Activated CD8-positive, alpha-beta T cell treated with anti-CD3 and anti-CD28 coated beads for 36 hours (primary cell): ENCODE measurements at regions of chr17 and their contacts with region 1.

Region 1: DNA sequence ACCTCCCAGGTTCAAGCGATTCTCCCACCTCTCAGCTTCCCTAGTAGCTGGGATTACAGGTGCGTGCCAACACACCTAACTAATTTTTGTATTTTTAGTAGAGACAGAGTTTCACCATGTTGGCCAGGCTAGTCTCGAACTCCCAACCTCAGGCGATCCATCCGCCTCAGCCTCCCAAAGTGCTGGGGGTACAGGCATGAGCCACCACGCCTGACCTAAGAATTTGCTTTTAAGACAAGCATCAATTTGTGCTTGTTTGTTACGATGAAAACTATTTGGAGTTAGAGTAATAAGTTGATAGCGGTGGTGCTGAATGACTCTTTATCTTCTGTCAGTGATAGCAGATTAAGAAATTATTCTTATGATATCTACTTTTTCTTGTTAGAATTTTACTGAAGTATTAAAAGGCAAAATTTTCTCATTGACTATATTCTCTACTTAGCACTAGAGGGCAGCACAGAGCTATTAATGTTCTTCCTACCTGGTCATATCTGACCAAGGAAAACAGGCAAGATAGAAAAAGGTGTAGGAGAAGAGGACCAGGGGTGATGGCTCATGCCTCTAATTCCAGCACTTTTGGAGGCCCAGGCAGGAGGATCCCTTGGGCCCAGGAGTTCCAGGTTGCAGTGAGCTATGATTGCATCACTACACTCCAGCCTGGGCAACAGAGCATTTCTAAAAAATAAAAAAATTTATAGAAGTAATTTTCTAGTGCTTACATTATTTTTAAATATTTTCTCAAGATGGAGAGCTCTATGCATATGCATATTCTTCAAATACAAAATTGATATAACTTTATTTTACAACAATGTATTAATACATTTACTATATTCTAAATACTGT is 24.5 kb downstream of the STXBP4 start:
- DNase-seq: no peak
- ATAC-seq: no peak
- H3K4me3 Mint-ChIP-seq: no peak overlapping the region
- H3K27ac Mint-ChIP-seq: no peak overlapping the region
- H3K4me1 Mint-ChIP-seq: no peaks in the 10 kb centered on the region
- H3K27me3 Mint-ChIP-seq: no peaks in the 10 kb centered on the region
- CTCF ChIP-seq: peak; percentile 70

Region 2: GRCh38 chr17:55005520-55005919 is 12.5 kb after region 1 on chr17:
- CTCF ChIA-PET with region 1: interaction called, 21 read pairs
- POLR2A ChIA-PET with region 1: no interaction called
- intact Hi-C with region 1: no loop called
- DNase-seq: peak; percentile 15
- ATAC-seq: peak; percentile 56
- H3K4me3 Mint-ChIP-seq: no peak overlapping the region
- H3K27ac Mint-ChIP-seq: no peak overlapping the region
- H3K4me1 Mint-ChIP-seq: no peaks in the 10 kb centered on the region
- H3K27me3 Mint-ChIP-seq: no peaks in the 10 kb centered on the region
- CTCF ChIP-seq: peak; percentile 62

Region 3: GRCh38 chr17:55040611-55041010 is 47.6 kb after region 1 on chr17:
- CTCF ChIA-PET with region 1: no interaction called
- POLR2A ChIA-PET with region 1: no interaction called
- intact Hi-C with region 1: no loop called
- DNase-seq: no peak
- ATAC-seq: no peak
- H3K4me3 Mint-ChIP-seq: no peak overlapping the region
- H3K27ac Mint-ChIP-seq: no peak overlapping the region
- H3K4me1 Mint-ChIP-seq: no peaks in the 10 kb centered on the region
- H3K27me3 Mint-ChIP-seq: no peaks in the 10 kb centered on the region
- CTCF ChIP-seq: no peak

Region 4: DNA sequence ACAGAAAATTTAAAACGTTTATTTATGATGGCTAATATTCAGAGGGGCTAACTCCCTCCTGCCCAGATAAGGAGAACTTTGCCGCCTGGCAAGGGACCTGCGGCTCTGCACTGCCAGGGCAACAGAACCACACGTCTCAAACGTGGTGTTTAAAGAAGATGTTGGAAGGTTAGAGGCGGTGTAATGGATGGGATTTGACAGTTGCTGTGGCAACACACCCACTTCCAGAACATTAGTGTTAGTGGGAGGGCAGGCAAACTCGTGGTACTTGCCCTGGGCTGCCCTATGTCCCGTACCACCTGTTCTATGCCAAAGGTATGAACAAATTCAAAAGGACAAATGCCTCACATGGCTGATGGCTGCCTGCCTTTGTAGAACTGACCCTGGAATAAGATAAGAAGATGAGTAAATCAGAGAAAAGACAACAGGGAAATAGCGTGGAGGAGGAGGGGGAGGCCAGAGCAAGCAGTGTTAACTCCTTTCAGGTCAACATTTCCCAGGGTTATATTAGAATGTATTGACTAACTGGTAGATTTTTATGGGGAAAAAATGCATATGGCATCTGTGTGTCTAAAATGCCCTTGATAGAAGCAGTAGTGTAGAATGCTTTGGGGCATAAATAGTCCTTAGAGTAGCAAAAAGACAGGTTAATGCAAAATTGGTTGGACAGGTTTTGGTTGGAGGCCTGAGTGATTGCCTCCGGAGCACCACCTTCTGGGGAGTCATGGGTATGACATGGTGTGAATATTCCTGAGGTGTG is 302.6 kb after region 1 on chr17:
- CTCF ChIA-PET with region 1: interaction called, 21 read pairs
- POLR2A ChIA-PET with region 1: no interaction called
- intact Hi-C with region 1: loop called (anchors 2 kb)
- DNase-seq: peak; percentile 62
- ATAC-seq: peak; percentile 88
- H3K4me3 Mint-ChIP-seq: no peak overlapping the region
- H3K27ac Mint-ChIP-seq: no peak overlapping the region
- H3K4me1 Mint-ChIP-seq: no peaks in the 10 kb centered on the region
- H3K27me3 Mint-ChIP-seq: no peaks in the 10 kb centered on the region
- CTCF ChIP-seq: peak; percentile 86

Region 5: DNA sequence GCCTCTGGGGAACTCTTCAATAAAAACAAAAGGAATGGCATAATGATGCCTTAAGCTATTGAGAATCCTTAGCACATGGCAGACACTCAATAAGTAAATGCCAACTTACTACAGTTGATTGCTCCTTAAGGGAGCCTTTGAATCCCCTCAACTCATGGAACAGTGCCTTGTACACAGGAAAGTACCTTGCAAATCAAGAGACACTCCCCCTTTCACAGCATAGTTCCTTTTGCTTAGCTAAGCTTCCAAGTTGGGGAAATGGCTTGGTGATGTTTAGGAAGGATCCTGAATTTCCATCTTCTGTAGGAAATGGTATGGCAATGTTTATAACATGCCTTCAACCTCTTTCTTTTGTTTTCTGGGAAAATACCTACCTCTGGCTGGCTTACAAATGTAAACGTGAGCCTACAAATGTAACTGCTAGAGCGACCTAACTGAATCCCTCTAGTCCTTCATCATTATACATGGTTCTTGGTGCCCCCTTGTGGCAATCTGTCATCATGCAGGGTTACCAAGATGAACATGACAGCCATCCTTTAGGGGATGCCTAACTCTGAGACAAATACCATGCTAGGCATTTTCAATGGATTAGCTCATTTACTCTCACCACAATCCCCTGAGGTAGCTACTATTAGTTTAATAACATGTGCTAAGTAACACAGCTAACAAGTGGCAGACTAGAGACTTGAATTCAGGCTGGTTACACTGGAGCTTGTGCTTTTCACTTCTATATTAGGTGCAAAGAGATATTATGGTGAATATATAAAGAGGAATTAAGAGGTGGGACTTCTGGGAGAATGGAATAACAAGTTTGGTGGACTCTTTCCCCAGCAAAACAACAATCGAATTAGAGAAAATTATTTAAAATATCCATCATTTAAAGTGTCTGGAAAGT is 363.7 kb after region 1 on chr17:
- CTCF ChIA-PET with region 1: interaction called, 48 read pairs
- POLR2A ChIA-PET with region 1: no interaction called
- intact Hi-C with region 1: no loop called
- DNase-seq: peak; percentile 89
- ATAC-seq: peak; percentile 94
- H3K4me3 Mint-ChIP-seq: no peak overlapping the region
- H3K27ac Mint-ChIP-seq: no peak overlapping the region
- H3K4me1 Mint-ChIP-seq: peaks cover 2% of the 10 kb centered on the region
- H3K27me3 Mint-ChIP-seq: peaks cover 9% of the 10 kb centered on the region
- CTCF ChIP-seq: peak; percentile 68